Left cardiac atrium (tissue), 4 donors: ENCODE measurements at regions of chr14 and their contacts with region 1.

Region 1: GRCh38 chr14:76654573-76655090 is 106.6 kb upstream of the VASH1 start:
- DNase-seq: no peak
- ATAC-seq: no peak

Region 2: DNA sequence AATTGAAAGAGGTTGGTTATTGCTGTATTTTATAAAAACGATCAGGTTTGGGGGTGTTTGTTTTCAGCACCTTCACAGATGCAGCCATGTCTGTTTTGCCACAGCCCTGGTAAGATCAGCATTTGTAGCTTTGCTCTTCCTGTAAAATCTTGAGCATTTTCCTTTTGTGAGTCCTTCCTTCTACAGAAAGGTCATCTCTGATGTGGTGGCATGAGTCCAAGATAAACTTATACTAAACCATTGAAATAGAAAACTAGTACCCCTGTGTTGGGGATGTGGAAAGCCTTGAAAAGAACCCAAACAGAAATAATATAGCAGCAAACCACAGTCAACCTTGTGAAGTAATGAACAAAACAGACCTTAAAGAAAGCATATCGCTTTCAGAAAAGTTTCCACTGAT is 758.3 kb before region 1 on chr14:
- intact Hi-C with region 1: loop called in 1 of 2 experiments (anchors 10 kb)
- DNase-seq: no peak
- ATAC-seq: no peak